GM23248 (cell line): ENCODE measurements at regions of chr5 and their contacts with region 1.

Region 1: GRCh38 chr5:147223948-147224791 is 10.7 kb upstream of the STK32A start:
- DNase-seq: peak; percentile 68
- H3K4me3 ChIP-seq: no peak overlapping the region
- H3K27ac ChIP-seq: no peak overlapping the region
- H3K4me1 ChIP-seq: no peaks in the 10 kb centered on the region
- H3K27me3 ChIP-seq: 0 out of 2 replicates have a peak, but pooled peaks cover 9% of the 10 kb centered on the region

Region 2: GRCh38 chr5:147369742-147370374 is 145.7 kb after region 1 on chr5:
- in situ Hi-C with region 1: loop called (anchors 10 kb)
- DNase-seq: peak; percentile 56
- H3K4me3 ChIP-seq: no peak overlapping the region
- H3K27ac ChIP-seq: no peak overlapping the region
- H3K4me1 ChIP-seq: no peaks in the 10 kb centered on the region
- H3K27me3 ChIP-seq: no peaks in the 10 kb centered on the region; the same call in 1 of the 2 replicates

Region 3: DNA sequence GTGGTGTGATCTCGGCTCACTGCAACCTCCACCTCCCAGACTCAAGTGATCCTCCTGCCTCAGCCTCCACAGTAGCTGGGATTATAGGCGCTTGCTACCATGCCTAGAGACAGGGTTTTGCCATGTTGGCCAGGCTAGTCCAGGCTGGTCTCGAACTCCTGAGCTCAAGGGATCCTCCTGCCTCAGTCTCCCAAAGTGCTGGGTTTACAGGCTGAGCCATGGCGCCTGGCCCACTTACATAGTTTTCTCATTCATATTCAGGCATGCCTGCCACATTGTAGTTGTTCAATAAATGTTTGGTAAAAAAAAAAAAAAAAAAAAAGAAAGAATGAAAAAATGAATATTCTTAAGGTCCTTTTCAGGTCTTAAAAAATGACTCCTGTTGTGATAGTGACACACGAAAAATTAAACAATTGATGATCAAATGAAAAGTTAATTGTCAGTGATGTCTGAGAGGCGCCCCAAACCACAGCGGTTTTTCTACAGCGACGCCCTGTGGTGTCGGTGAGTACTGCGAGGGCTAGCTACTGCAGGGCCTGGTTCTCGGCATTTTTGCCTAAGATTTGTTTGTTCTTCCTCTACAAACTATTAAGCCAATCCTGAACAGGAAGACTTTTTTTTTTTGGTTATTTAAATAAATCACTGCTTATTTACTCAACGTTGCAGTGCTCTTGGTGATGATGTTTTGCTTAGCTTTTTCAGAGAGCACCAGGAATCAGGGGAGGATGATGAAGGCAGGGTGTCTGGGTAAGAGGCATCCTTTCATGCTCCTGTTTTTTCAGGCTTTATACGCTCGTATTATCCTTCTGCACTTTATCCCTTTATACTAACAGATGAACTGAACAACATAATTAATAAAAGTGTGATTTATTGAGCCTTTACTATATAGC is 352.7 kb after region 1 on chr5:
- in situ Hi-C with region 1: loop called (anchors 10 kb)
- DNase-seq: peak; percentile 58
- H3K4me3 ChIP-seq: no peak overlapping the region
- H3K27ac ChIP-seq: no peak overlapping the region
- H3K4me1 ChIP-seq: no peaks in the 10 kb centered on the region
- H3K27me3 ChIP-seq: no peaks in the 10 kb centered on the region